Heart left ventricle (tissue), 16 donors: ENCODE measurements at regions of chr13 and their contacts with region 1.

Region 1: GRCh38 chr13:75365724-75366173 is 116.2 kb downstream of the TBC1D4 start:
- DNase-seq: no peak
- ATAC-seq: peak; percentile 37 to 76 (median 66)
- H3K4me3 ChIP-seq: peak overlapping the region in 9 of 12 donors; percentile 4 to 35 (median 21)
- H3K27ac ChIP-seq: peak overlapping the region; percentile 11 to 86 (median 72)
- H3K4me1 ChIP-seq: peaks cover 0 to 68% (median 34%) of the 10 kb centered on the region in 12 donors
- H3K27me3 ChIP-seq: no peaks in the 10 kb centered on the region
- CTCF ChIP-seq: peak in 1 of 12 donors; percentile 11
- POLR2A ChIP-seq: peak in 1 of 2 donors; percentile 15

Region 2: GRCh38 chr13:75549262-75550158 is 183.8 kb after region 1 on chr13 and contains the start of gene UCHL3:
- intact Hi-C with region 1: loop called in 9 of 10 experiments (anchors 5 to 10 kb)
- DNase-seq: peak; percentile 95 to 99 (median 97)
- ATAC-seq: peak; percentile 96 to 99 (median 98)
- H3K4me3 ChIP-seq: peak within 1 kb of the TSS; percentile 61 to 99 (median 87)
- H3K27ac ChIP-seq: peak within 1 kb of the TSS; percentile 64 to 95 (median 84)
- H3K4me1 ChIP-seq: peaks cover 0 to 16% (median 10%) of the 10 kb centered on the region in 12 donors
- H3K27me3 ChIP-seq: no peaks in the 10 kb centered on the region
- CTCF ChIP-seq: peak; percentile 74 to 99 (median 87)
- POLR2A ChIP-seq: peak in 1 of 2 donors; percentile 68
- total RNA-seq, gene UCHL3: 16.3 to 52.8 (median 27.6) TPM